CD4-positive, alpha-beta T cell (primary cell): ENCODE measurements at regions of chr4 and their contacts with region 1.

Region 1: GRCh38 chr4:158671915-158672806 is at the start of gene ETFDH:
- DNase-seq: peak; percentile 96 to 100 (median 98)
- ATAC-seq: peak; percentile 83
- H3K4me3 ChIP-seq: peak within 1 kb of the TSS; percentile 98
- H3K4me3 Mint-ChIP-seq: peak within 1 kb of the TSS; percentile 93
- H3K27ac ChIP-seq: peak within 1 kb of the TSS; percentile 91 to 99
- H3K27ac Mint-ChIP-seq: peak within 1 kb of the TSS; percentile 85
- H3K4me1 ChIP-seq: peaks cover 19% of the 10 kb centered on the region
- H3K4me1 Mint-ChIP-seq: peaks cover 25% of the 10 kb centered on the region
- H3K27me3 ChIP-seq: no peaks in the 10 kb centered on the region
- H3K27me3 Mint-ChIP-seq: no peaks in the 10 kb centered on the region
- CTCF ChIP-seq: peak; percentile 62
- total RNA-seq, gene ETFDH: 12.7 to 13.1 TPM

Region 2: DNA sequence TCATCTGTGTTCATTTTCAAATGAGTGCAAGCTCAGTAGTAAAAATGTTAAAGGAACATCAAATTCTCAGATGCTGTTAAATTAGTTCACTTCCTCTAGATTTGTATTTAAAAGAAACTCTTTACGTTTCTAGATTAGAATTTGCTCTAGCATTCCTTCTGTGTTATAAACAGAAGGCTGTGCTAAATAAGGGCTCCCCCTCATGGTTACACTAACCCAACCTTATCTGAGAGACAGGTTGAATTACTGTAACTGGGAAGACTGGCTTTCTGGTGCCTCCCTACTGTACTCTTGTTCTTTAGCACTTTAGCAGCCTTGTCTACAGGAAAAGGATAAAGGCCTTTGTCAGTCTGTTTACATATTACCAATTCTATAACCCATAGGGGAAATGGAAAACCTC is 93.7 kb before region 1 on chr4:
- CTCF ChIA-PET with region 1: no interaction called
- POLR2A ChIA-PET with region 1: no interaction called
- intact Hi-C with region 1: no loop called
- DNase-seq: no peak
- ATAC-seq: no peak
- H3K4me3 ChIP-seq: no peak overlapping the region
- H3K4me3 Mint-ChIP-seq: no peak overlapping the region
- H3K27ac ChIP-seq: no peak overlapping the region
- H3K27ac Mint-ChIP-seq: no peak overlapping the region
- H3K4me1 ChIP-seq: no peaks in the 10 kb centered on the region
- H3K4me1 Mint-ChIP-seq: no peaks in the 10 kb centered on the region
- H3K27me3 ChIP-seq: no peaks in the 10 kb centered on the region
- H3K27me3 Mint-ChIP-seq: peaks cover 6% of the 10 kb centered on the region
- CTCF ChIP-seq: no peak

Region 3: DNA sequence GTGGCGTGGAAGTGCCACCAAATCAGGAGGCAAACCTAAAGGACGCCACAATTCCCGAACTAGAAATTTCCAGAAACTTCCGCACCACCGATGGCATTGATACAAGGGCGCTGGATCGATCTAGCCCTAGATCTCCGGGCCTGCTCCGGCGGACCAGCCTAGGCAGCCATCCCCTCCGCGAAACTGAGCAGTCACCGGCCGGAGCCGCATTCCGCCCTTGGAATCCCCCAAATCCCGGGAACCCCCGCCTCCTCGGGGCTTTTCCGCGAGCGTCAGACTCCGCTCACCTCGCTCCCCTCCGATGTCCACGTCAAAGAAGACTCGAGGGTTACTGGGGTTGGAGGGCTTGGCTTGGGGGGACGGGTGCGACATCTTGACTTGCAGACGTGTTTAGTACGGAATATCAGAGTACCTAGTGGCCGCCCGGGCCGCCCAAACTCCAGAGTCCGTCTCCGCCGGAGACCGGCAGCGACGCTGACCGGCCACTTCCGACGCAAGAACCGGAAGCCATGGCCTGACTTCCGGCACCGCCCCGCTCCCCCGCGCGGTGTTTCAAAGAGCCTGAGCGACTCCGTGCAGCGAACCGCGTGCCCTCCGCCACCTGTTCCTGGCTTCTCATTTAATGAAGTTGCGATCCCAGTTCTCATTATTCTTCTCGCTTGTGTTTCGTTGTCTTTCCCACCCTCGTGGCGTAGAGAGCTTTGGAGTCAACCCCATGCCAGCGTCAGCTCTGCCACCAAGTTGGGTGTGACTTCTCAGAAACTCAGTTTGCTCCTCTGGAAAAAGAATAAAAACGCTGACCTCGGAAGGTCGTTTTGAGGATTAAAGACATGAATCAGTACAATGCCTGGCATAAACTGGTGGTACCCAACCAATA is 51.0 kb after region 1 on chr4 and contains the start of gene PPID:
- CTCF ChIA-PET with region 1: no interaction called
- POLR2A ChIA-PET with region 1: no interaction called
- intact Hi-C with region 1: loop called (anchors 2 kb)
- DNase-seq: peak; percentile 56 to 92 (median 70)
- ATAC-seq: peak; percentile 84
- H3K4me3 ChIP-seq: peak within 1 kb of the TSS; percentile 97
- H3K4me3 Mint-ChIP-seq: peak within 1 kb of the TSS; percentile 96
- H3K27ac ChIP-seq: peak within 1 kb of the TSS; percentile 85 to 94
- H3K27ac Mint-ChIP-seq: peak within 1 kb of the TSS; percentile 94
- H3K4me1 ChIP-seq: peaks cover 17% of the 10 kb centered on the region
- H3K4me1 Mint-ChIP-seq: peaks cover 38% of the 10 kb centered on the region
- H3K27me3 ChIP-seq: no peaks in the 10 kb centered on the region
- H3K27me3 Mint-ChIP-seq: no peaks in the 10 kb centered on the region
- CTCF ChIP-seq: no peak
- total RNA-seq, gene PPID: 10.7 to 10.8 TPM

Region 4: GRCh38 chr4:158768555-158769174 is 96.5 kb after region 1 on chr4 and contains the start of gene FNIP2:
- CTCF ChIA-PET with region 1: no interaction called
- POLR2A ChIA-PET with region 1: no interaction called
- intact Hi-C with region 1: loop called in 1 of 2 experiments (anchors 2 kb)
- DNase-seq: peak; percentile 39 to 90 (median 66)
- ATAC-seq: peak; percentile 78
- H3K4me3 ChIP-seq: peak within 1 kb of the TSS; percentile 69
- H3K4me3 Mint-ChIP-seq: peak within 1 kb of the TSS; percentile 98
- H3K27ac ChIP-seq: peak within 1 kb of the TSS; percentile 32 to 62
- H3K27ac Mint-ChIP-seq: peak within 1 kb of the TSS; percentile 91
- H3K4me1 ChIP-seq: peaks cover 10% of the 10 kb centered on the region
- H3K4me1 Mint-ChIP-seq: peaks cover 42% of the 10 kb centered on the region
- H3K27me3 ChIP-seq: no peaks in the 10 kb centered on the region
- H3K27me3 Mint-ChIP-seq: no peaks in the 10 kb centered on the region
- CTCF ChIP-seq: no peak
- total RNA-seq, gene FNIP2: 7.5 to 7.7 TPM